Gastrocnemius medialis (tissue), 4 donors: ENCODE measurements at regions of chr9 and their contacts with region 1.

Region 1: GRCh38 chr9:112819635-112820496 is 69.3 kb downstream of the SNX30 start:
- DNase-seq: peak; percentile 50 to 76
- ATAC-seq: peak; percentile 97 to 99
- H3K4me3 ChIP-seq: no peak overlapping the region
- H3K27ac ChIP-seq: peak overlapping the region in 3 of 4 donors; percentile 26 to 50 (median 47)
- H3K4me1 ChIP-seq: peaks cover 3 to 5% of the 10 kb centered on the region in 2 donors
- H3K27me3 ChIP-seq: no peaks in the 10 kb centered on the region
- CTCF ChIP-seq: peak; percentile 55 to 78 (median 70)
- POLR2A ChIP-seq: no peak

Region 2: DNA sequence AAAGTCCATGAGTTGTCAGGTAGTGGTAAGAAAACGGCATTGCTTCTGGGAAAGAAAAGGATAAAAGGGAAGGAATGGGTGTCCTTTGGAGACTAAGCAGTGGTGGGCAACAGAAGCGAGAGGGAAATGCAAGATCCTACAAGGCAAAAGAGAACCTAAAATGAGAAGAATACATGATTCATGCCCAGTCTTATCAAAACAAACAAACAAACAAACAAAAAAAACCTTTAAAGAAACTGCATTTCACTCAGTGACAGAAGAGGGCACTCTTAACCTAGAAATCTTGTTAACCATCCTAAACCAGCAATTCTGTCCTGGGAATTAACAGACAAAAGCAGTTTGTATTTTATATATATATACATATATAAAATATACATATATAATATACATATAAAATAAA is 733.2 kb before region 1 on chr9:
- in situ Hi-C with region 1: loop called in 2 of 4 experiments (anchors 25 kb)
- intact Hi-C with region 1: loop called (anchors 10 kb)
- DNase-seq: no peak
- ATAC-seq: no peak
- H3K4me3 ChIP-seq: no peak overlapping the region
- H3K27ac ChIP-seq: no peak overlapping the region
- H3K4me1 ChIP-seq: no peaks in the 10 kb centered on the region
- H3K27me3 ChIP-seq: no peaks in the 10 kb centered on the region
- CTCF ChIP-seq: peak in 3 of 5 experiments; percentile 15 to 53 (median 40)
- POLR2A ChIP-seq: no peak

Region 3: GRCh38 chr9:113741886-113742854 is 922.3 kb after region 1 on chr9:
- in situ Hi-C with region 1: no loop called
- intact Hi-C with region 1: no loop called
- DNase-seq: no peak
- ATAC-seq: no peak
- H3K4me3 ChIP-seq: no peak overlapping the region
- H3K27ac ChIP-seq: no peak overlapping the region
- H3K4me1 ChIP-seq: no peaks in the 10 kb centered on the region
- H3K27me3 ChIP-seq: peaks cover 0 to 4% (median 4%) of the 10 kb centered on the region in 3 donors
- CTCF ChIP-seq: no peak
- POLR2A ChIP-seq: no peak